Activated CD4-positive, alpha-beta T cell treated with anti-CD3 and anti-CD28 coated beads for 36 hours (primary cell): ENCODE measurements at regions of chr7 and their contacts with region 1.

Region 1: DNA sequence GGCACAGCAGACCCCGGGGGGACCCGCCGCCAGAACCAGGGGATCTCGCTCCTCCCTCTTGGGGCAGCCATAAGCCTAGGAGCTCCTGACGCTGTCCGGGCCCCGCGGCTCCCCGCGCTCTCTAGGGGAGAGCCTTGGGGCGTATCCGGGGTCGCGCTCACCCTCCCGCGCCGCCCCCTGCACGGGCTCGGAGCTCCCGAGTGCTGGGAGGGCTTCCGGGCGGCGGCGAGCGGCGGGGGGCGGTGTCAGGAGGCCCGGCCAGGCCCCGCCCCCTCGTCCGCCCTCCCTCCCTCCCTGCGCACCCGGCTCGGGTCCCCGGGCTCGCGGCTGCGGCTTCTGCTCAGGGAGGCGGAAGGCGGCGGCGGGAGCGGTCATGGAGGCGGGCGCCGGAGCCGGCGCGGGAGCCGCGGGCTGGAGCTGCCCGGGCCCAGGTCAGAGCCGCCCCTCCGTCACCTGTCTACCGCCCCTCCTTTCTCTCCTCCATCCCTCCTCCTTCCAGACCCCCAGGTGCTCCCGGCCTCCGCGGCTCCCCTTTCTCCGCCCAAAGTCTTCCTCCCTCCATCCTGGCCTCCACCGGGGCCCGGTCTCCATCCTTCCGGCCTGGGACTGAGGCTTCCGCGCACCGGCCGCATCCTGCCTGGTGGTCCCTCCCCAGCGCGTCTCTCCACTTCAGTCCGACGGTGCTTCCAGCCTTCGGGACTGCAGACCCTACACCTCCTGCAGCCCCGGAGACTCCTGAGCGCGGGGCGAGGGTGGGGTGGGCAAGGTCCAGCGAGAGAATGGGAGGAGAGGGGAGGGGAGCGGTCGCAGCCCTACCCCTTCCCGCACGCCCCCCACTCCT is 427 bp upstream of the CCDC136 start:
- DNase-seq: peak; percentile 88
- ATAC-seq: peak; percentile 91
- H3K4me3 Mint-ChIP-seq: peak overlapping the region; percentile 75
- H3K27ac Mint-ChIP-seq: peak overlapping the region; percentile 28
- H3K4me1 Mint-ChIP-seq: peaks cover 5% of the 10 kb centered on the region
- H3K27me3 Mint-ChIP-seq: peaks cover 9% of the 10 kb centered on the region

Region 2: GRCh38 chr7:128209229-128210035 is 581.9 kb before region 1 on chr7:
- CTCF ChIA-PET with region 1: no interaction called
- POLR2A ChIA-PET with region 1: no interaction called
- intact Hi-C with region 1: no loop called
- DNase-seq: peak; percentile 80
- ATAC-seq: peak; percentile 85
- H3K4me3 Mint-ChIP-seq: no peak overlapping the region
- H3K27ac Mint-ChIP-seq: no peak overlapping the region
- H3K4me1 Mint-ChIP-seq: no peaks in the 10 kb centered on the region
- H3K27me3 Mint-ChIP-seq: peaks cover 6% of the 10 kb centered on the region

Region 3: GRCh38 chr7:128409596-128410160 is 381.7 kb before region 1 on chr7 and contains the start of gene IMPDH1:
- CTCF ChIA-PET with region 1: no interaction called
- POLR2A ChIA-PET with region 1: no interaction called
- intact Hi-C with region 1: loop called in 1 of 2 experiments (anchors 1 kb)
- DNase-seq: peak; percentile 92
- ATAC-seq: peak; percentile 85
- H3K4me3 Mint-ChIP-seq: peak within 1 kb of the TSS; percentile 78
- H3K27ac Mint-ChIP-seq: peak within 1 kb of the TSS; percentile 78
- H3K4me1 Mint-ChIP-seq: peaks cover 27% of the 10 kb centered on the region
- H3K27me3 Mint-ChIP-seq: no peaks in the 10 kb centered on the region
- total RNA-seq, gene IMPDH1: 59.0 to 60.7 TPM

Region 4: DNA sequence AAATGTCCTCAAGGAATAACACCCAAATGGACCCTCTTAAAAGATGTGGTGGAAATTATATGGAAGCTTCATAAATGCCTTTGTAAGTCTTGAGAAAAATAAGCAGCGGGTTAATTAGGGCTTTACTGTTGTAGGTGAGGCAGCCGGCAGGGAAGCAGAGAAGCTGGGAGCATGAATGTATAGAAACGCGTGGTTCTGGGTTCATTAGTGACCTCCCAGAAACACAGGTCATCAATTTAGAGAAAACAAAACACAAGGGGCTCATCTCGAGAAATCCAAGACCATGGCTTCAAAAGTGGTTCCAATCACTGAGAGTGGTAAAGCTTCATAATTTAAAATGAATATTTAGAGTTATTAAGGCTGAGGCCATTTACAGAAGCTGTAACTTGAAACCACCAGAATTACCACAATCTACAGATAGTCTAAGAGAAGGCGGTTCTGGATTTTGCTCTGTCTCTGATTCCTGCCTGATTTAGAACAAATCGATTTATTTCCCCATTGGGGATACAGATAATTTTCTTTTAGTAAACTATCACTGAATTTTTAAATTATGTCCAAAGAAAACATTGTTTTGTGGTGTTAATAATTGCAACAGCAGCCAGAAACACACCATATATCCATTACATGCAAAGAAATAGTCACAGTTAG is 98.6 kb before region 1 on chr7:
- CTCF ChIA-PET with region 1: no interaction called
- POLR2A ChIA-PET with region 1: no interaction called
- intact Hi-C with region 1: no loop called
- DNase-seq: no peak
- ATAC-seq: no peak
- H3K4me3 Mint-ChIP-seq: no peak overlapping the region
- H3K27ac Mint-ChIP-seq: no peak overlapping the region
- H3K4me1 Mint-ChIP-seq: peaks cover 5% of the 10 kb centered on the region
- H3K27me3 Mint-ChIP-seq: peaks cover 25% of the 10 kb centered on the region

Region 5: GRCh38 chr7:128739048-128739962 is 52.0 kb before region 1 on chr7 and contains the start of gene CALU:
- CTCF ChIA-PET with region 1: no interaction called
- POLR2A ChIA-PET with region 1: interaction called, 6 read pairs
- intact Hi-C with region 1: loop called (anchors 1 kb)
- DNase-seq: peak; percentile 97
- ATAC-seq: peak; percentile 98
- H3K4me3 Mint-ChIP-seq: peak within 1 kb of the TSS; percentile 99
- H3K27ac Mint-ChIP-seq: peak within 1 kb of the TSS; percentile 93
- H3K4me1 Mint-ChIP-seq: peaks cover 38% of the 10 kb centered on the region
- H3K27me3 Mint-ChIP-seq: peaks cover 3% of the 10 kb centered on the region
- total RNA-seq, gene CALU: 32.9 to 33.8 TPM

Region 6: DNA sequence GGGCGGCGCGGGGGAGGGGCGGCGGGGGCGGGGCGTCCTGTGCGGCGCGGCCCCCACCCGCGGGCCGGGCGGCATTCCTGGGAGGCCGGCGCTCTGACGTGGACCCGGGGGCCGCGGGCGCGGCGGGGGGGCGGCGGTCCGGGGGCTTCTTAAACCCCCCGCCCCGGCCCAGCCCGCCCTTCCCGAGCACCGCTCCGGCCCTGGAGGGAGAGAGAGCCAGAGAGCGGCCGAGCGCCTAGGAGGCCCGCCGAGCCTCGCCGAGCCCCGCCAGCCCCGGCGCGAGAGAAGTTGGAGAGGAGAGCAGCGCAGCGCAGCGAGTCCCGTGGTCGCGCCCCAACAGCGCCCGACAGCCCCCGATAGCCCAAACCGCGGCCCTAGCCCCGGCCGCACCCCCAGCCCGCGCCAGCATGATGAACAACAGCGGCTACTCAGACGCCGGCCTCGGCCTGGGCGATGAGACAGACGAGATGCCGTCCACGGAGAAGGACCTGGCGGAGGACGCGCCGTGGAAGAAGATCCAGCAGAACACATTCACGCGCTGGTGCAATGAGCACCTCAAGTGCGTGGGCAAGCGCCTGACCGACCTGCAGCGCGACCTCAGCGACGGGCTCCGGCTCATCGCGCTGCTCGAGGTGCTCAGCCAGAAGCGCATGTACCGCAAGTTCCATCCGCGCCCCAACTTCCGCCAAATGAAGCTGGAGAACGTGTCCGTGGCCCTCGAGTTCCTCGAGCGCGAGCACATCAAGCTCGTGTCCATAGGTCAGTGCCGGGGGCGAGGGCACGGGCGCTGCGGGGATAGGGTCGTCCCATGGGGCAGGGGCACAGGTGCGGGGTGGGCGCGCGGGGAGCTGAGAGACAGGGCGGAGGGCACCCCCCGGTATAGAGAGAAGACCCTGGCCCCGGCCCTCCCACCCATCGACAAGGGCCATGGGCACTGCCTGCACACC is 39.2 kb after region 1 on chr7 and contains the start of gene FLNC:
- CTCF ChIA-PET with region 1: no interaction called
- POLR2A ChIA-PET with region 1: no interaction called
- intact Hi-C with region 1: loop called in 1 of 2 experiments (anchors 2 kb)
- DNase-seq: peak; percentile 61
- ATAC-seq: peak; percentile 62
- H3K4me3 Mint-ChIP-seq: peak within 1 kb of the TSS; percentile 30
- H3K27ac Mint-ChIP-seq: no peak within 1 kb of the TSS
- H3K4me1 Mint-ChIP-seq: peaks cover 13% of the 10 kb centered on the region
- H3K27me3 Mint-ChIP-seq: peaks cover 27% of the 10 kb centered on the region
- total RNA-seq, gene FLNC: 0.09 to 0.18 TPM

Region 7: DNA sequence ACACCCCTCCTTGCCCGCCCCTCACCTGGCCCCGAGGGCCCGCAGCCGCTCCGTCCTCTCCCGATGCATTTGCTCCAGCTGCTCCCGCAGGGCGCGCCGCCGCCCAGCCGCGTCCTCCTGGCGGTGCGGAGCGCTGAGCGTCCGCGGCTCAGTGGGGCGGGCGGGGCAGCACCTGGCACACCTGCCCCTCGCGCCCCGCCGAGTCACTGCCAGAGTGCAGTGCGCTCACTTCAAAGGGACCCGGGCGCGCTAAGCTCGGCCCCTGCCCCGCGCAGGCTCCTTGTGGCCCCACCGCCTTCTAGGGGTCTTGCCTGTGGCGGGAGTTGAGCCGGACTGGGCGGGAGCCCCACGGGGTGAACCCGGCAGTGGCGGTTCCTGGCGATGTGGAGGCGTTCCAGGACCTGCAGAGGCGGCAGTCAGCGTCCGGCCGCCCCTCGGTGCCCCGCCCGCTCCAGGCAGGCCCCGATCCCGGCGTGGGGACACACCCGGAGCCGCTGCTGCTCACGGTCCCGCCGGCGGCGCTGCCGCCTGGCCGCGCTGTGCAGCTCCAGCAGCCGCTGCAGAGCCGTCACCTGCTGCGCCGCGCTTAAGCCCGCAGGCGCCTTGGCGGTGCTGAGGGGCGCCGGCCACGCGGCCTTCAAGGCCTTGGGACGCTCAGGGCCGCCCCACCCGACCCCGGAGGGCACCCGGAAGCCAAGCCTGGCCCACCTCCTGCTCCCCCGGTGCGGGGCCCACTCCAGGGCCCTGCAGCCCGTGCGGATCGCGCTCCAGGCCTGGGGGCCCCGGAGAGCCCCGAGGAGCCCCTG is 78.0 kb after region 1 on chr7:
- CTCF ChIA-PET with region 1: no interaction called
- POLR2A ChIA-PET with region 1: no interaction called
- intact Hi-C with region 1: loop called (anchors 1 to 10 kb)
- DNase-seq: peak; percentile 78
- ATAC-seq: peak; percentile 92
- H3K4me3 Mint-ChIP-seq: peak overlapping the region; percentile 33
- H3K27ac Mint-ChIP-seq: no peak overlapping the region
- H3K4me1 Mint-ChIP-seq: peaks cover 9% of the 10 kb centered on the region
- H3K27me3 Mint-ChIP-seq: peaks cover 2% of the 10 kb centered on the region

Region 8: GRCh38 chr7:128883622-128884501 is 92.5 kb after region 1 on chr7:
- CTCF ChIA-PET with region 1: interaction called, 5 read pairs
- POLR2A ChIA-PET with region 1: no interaction called
- intact Hi-C with region 1: loop called (anchors 1 kb)
- DNase-seq: peak; percentile 92
- ATAC-seq: peak; percentile 82
- H3K4me3 Mint-ChIP-seq: no peak overlapping the region
- H3K27ac Mint-ChIP-seq: no peak overlapping the region
- H3K4me1 Mint-ChIP-seq: no peaks in the 10 kb centered on the region
- H3K27me3 Mint-ChIP-seq: peaks cover 2% of the 10 kb centered on the region